CD14-positive monocyte (primary cell): ENCODE measurements at regions of chr20 and their contacts with region 1.

Region 1: DNA sequence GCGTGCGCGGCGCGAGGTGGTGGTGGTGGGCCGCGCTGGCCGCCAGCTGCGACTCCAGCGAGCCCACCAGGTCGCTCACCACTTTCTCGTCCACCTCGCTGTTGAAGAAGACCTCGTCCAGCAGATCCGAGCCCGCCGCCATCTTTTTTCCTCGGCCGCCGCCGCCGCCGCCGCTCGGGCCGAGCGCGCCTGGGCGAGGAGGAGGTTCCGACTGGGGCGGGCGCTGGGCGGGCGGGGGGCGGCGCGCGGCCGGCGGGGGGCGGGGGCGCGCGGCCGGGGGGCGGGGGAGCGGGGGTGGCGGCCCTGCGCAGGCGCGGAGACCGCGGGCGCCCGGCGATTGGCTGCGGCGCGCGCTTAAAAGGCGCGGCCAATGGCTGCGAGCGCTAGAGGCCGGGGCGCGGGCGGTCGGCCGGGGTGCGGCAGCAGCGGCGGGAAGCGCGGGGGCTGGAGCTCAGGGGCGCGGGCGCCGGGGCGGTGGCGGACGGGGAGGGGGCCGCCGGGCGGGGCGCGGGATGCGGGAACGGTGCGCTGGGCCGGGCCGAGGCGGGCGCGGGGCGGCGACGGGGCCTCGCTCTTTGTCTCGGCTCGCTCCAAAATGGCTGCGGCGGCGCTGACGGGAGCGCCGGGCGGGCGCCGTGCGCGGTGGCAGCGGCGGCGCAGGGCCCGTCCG is at the start of gene TAF4:
- DNase-seq: peak; percentile 68 to 84 (median 79)
- H3K4me3 ChIP-seq: peak within 1 kb of the TSS; percentile 62 to 89 (median 89)
- H3K4me3 Mint-ChIP-seq: peak within 1 kb of the TSS; percentile 87 to 96
- H3K27ac ChIP-seq: peak within 1 kb of the TSS in 1 of 2 donors; percentile 68
- H3K27ac Mint-ChIP-seq: peak within 1 kb of the TSS in 6 of 7 donors; percentile 53 to 90 (median 80)
- H3K4me1 ChIP-seq: peaks cover 44 to 53% of the 10 kb centered on the region in 2 donors
- H3K4me1 Mint-ChIP-seq: peaks cover 49% of the 10 kb centered on the region
- H3K27me3 ChIP-seq: no peaks in the 10 kb centered on the region
- H3K27me3 Mint-ChIP-seq: peaks cover 4 to 21% (median 4%) of the 10 kb centered on the region in 3 donors
- CTCF ChIP-seq: no peak
- polyA plus RNA-seq, gene TAF4: 0.48 to 14.9 (median 0.99) TPM

Region 2: DNA sequence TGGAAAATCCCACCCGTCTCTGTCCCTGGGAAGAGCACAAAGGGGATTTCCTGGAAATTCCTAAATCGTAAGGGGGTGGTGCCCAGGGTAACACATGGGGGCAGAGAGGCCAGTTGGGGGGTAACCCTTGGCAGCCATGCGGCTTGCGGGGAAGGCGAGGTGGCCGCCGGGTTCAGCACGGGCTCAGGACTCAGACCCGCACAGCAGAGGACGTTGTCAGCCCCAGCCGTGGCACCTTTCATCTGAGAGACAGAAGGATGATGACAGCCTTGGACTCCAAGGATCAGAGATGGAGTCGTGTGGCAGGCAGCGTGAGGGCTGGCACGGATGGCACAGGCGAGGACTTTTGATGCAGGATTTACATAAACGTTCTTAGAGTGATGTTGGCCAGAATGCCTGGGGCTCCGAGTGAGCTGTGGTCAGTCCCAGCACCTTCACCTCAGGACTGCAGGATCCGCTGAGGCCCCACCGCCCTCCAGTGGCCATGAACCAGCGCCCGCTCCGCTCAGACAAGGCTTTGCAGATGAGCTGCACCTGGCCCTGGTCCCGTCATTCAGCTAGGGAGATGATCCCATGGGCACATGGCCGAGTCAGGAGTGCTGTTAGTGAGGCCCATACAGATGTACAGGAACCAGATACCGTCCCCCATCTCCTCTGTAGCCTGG is 190.5 kb before region 1 on chr20:
- intact Hi-C with region 1: no loop called
- DNase-seq: no peak
- H3K4me3 ChIP-seq: no peak overlapping the region
- H3K4me3 Mint-ChIP-seq: no peak overlapping the region
- H3K27ac ChIP-seq: no peak overlapping the region
- H3K27ac Mint-ChIP-seq: no peak overlapping the region
- H3K4me1 ChIP-seq: no peaks in the 10 kb centered on the region
- H3K4me1 Mint-ChIP-seq: no peaks in the 10 kb centered on the region
- H3K27me3 ChIP-seq: no peaks in the 10 kb centered on the region
- H3K27me3 Mint-ChIP-seq: peaks cover 0 to 3% (median 0%) of the 10 kb centered on the region in 3 donors
- CTCF ChIP-seq: no peak

Region 3: GRCh38 chr20:62182613-62183425 is 117.0 kb after region 1 on chr20 and contains the start of gene MTG2:
- intact Hi-C with region 1: loop called in 1 of 2 experiments (anchors 5 kb)
- DNase-seq: peak; percentile 96 to 97 (median 96)
- H3K4me3 ChIP-seq: peak within 1 kb of the TSS; percentile 77 to 99 (median 84)
- H3K4me3 Mint-ChIP-seq: peak within 1 kb of the TSS; percentile 87 to 91
- H3K27ac ChIP-seq: peak within 1 kb of the TSS; percentile 57 to 92
- H3K27ac Mint-ChIP-seq: peak within 1 kb of the TSS; percentile 89 to 96 (median 93)
- H3K4me1 ChIP-seq: peaks cover 20 to 31% of the 10 kb centered on the region in 2 donors
- H3K4me1 Mint-ChIP-seq: peaks cover 43% of the 10 kb centered on the region
- H3K27me3 ChIP-seq: no peaks in the 10 kb centered on the region
- H3K27me3 Mint-ChIP-seq: peaks cover 0 to 2% (median 0%) of the 10 kb centered on the region in 3 donors
- CTCF ChIP-seq: no peak
- polyA plus RNA-seq, gene MTG2: 10.8 to 16.1 (median 14.9) TPM

Region 4: DNA sequence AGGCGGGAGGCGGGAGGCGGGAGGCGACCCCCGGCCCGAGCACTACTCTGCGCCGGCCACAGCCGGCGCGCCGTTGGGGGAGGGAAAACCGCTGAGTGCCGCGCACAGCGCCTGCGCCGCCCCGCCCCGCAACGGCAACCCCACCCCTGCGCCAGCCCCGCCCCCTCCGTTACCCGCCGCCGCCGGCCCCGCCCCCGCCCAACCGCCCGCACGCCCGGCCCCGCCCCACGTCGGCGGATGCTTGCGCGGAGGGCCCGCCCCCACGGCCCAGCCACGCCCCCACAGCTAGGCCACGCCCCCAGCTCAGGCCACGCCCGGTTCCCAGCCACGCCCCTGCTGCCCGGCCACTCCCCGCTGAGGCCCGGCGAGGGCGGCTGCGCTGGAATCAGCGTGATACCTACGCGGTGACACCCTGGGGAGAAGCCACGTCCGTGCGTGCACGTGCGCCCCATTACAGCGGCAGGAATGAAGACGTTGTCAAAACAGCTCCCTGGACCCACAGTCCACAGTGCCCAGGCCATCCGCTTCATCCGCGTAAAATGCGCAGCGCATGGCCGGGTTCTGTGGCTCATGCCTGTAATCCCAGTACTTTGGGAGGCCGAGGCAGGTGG is 796.0 kb after region 1 on chr20 and contains the start of gene TCFL5:
- intact Hi-C with region 1: loop called in 1 of 2 experiments (anchors 5 kb)
- DNase-seq: peak; percentile 84 to 92 (median 84)
- H3K4me3 ChIP-seq: peak within 1 kb of the TSS in 2 of 3 experiments; percentile 24 to 59
- H3K4me3 Mint-ChIP-seq: peak within 1 kb of the TSS; percentile 69 to 82
- H3K27ac ChIP-seq: no peak within 1 kb of the TSS
- H3K27ac Mint-ChIP-seq: peak within 1 kb of the TSS in 3 of 7 donors; percentile 23 to 66 (median 30)
- H3K4me1 ChIP-seq: peaks cover 10 to 13% of the 10 kb centered on the region in 2 donors
- H3K4me1 Mint-ChIP-seq: peaks cover 15% of the 10 kb centered on the region
- H3K27me3 ChIP-seq: peaks cover 8 to 12% of the 10 kb centered on the region in 2 donors
- H3K27me3 Mint-ChIP-seq: peaks cover 20 to 28% (median 27%) of the 10 kb centered on the region in 3 donors
- CTCF ChIP-seq: no peak
- polyA plus RNA-seq, gene TCFL5: 0.38 to 3.5 (median 0.89) TPM